GM12878 (cell line): ENCODE measurements at regions of chr5 and their contacts with region 1.

Region 1: GRCh38 chr5:66529182-66529581 is 67.0 kb upstream of the MAST4 start:
- DNase-seq: no peak
- ATAC-seq: no peak
- H3K4me3 ChIP-seq: no peak overlapping the region
- H3K27ac ChIP-seq: no peak overlapping the region
- H3K4me1 ChIP-seq: no peaks in the 10 kb centered on the region
- H3K27me3 ChIP-seq: no peaks in the 10 kb centered on the region; a peak in 1 of 4 replicates
- CTCF ChIP-seq: 0 out of 6 replicates have a peak, but pooled peaks of 1 of the 3 experiments have one; percentile 12
- EP300 ChIP-seq: no peak
- POLR2A ChIP-seq: no peak
- RAD21 ChIP-seq: 0 out of 2 replicates have a peak, but pooled peaks have one; percentile 28

Region 2: GRCh38 chr5:65663804-65664521 is 865.2 kb before region 1 on chr5:
- CTCF ChIA-PET with region 1: no interaction called
- POLR2A ChIA-PET with region 1: no interaction called
- RAD21 ChIA-PET with region 1: no interaction called
- SMC1A ChIA-PET with region 1: no interaction called
- in situ Hi-C with region 1: no loop called
- intact Hi-C with region 1: loop called (anchors 10 kb)
- DNase-seq: no peak
- ATAC-seq: no peak
- H3K4me3 ChIP-seq: no peak overlapping the region
- H3K27ac ChIP-seq: no peak overlapping the region
- H3K4me1 ChIP-seq: no peaks in the 10 kb centered on the region
- H3K27me3 ChIP-seq: no peaks in the 10 kb centered on the region
- CTCF ChIP-seq: 0 out of 6 replicates have a peak, but pooled peaks of 1 of the 3 experiments have one; percentile 6
- EP300 ChIP-seq: no peak
- POLR2A ChIP-seq: no peak
- RAD21 ChIP-seq: no peak

Region 3: GRCh38 chr5:66281294-66281693 is 247.9 kb before region 1 on chr5:
- CTCF ChIA-PET with region 1: no interaction called
- POLR2A ChIA-PET with region 1: no interaction called
- RAD21 ChIA-PET with region 1: no interaction called
- SMC1A ChIA-PET with region 1: no interaction called
- in situ Hi-C with region 1: no loop called
- intact Hi-C with region 1: no loop called
- DNase-seq: no peak
- ATAC-seq: no peak
- H3K4me3 ChIP-seq: no peak overlapping the region
- H3K27ac ChIP-seq: no peak overlapping the region
- H3K4me1 ChIP-seq: no peaks in the 10 kb centered on the region
- H3K27me3 ChIP-seq: 0 out of 4 replicates have a peak, but pooled peaks cover 0 to 1% of the 10 kb centered on the region in 2 experiments
- CTCF ChIP-seq: no peak
- EP300 ChIP-seq: no peak
- POLR2A ChIP-seq: no peak
- RAD21 ChIP-seq: no peak

Region 4: DNA sequence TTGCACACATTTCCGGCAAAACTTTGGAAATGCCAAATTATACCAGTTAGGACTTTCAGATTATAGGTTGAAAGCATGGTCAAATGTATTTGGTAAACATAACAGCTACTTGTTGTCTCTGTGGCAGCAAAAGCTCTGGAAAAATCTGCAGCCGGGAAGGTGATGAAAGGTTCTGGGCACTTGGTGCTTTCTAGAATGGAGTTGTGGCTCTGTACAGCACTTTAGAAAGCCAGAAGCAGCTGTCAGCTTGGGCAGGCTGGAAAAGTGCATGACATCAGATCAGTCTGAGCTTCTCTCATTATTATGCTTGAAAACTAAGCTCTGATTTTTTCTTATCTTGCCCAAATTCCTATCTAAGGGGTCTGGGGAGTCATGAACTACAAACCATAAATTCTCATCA is 51.6 kb before region 1 on chr5:
- CTCF ChIA-PET with region 1: no interaction called
- POLR2A ChIA-PET with region 1: no interaction called
- RAD21 ChIA-PET with region 1: no interaction called
- SMC1A ChIA-PET with region 1: no interaction called
- in situ Hi-C with region 1: no loop called
- intact Hi-C with region 1: no loop called
- DNase-seq: no peak
- ATAC-seq: no peak
- H3K4me3 ChIP-seq: no peak overlapping the region
- H3K27ac ChIP-seq: no peak overlapping the region
- H3K4me1 ChIP-seq: no peaks in the 10 kb centered on the region
- H3K27me3 ChIP-seq: no peaks in the 10 kb centered on the region
- CTCF ChIP-seq: no peak
- EP300 ChIP-seq: no peak
- POLR2A ChIP-seq: no peak
- RAD21 ChIP-seq: no peak